CD4-positive, alpha-beta T cell (primary cell): ENCODE measurements at regions of chr3 and their contacts with region 1.

Region 1: DNA sequence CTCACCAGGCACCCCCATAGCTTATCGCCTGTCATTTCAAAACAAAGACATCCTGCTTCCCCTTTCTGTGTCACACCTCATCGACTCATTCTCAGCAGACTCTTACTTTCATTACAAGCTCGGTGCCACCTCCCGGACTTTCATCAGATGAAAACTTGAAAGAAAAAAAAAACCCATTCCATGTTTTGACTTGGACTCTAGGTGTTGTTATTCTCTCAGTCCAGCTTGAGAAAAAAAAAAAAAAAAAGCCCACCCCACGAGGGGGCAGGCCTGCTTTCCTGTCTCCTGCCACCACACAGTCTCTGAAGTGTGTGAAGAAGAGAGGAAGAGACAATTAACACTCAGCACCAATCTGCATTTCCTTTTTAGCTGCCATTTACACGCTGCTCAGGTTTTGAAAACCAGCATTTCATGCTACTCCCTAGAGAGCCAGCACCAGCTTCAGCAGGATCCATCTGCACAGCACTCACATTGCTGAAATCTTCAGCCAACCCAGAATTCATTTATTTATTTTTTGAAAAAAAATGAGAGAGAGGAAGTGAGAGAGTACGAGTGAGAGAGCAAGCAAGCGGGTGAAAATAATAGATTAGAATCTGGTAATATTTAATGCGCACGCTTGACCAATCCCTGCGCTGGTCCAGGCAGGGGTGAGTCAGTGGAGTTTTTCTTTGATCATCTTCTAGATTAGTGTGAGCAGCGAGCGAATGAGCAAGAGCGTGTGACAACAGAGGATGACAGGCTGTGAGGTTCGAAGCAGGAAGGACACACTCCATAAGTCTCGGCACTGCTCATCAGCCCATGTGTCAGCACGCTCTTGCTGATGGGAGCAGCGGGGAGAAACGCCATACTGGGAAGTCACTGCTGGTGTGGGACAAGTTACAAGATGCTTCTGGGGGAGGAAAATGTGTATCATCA is 23.5 kb downstream of the ZNF80 start:
- DNase-seq: peak; percentile 53 to 91 (median 64)
- ATAC-seq: peak; percentile 51
- H3K4me3 ChIP-seq: peak overlapping the region; percentile 59
- H3K4me3 Mint-ChIP-seq: no peak overlapping the region
- H3K27ac ChIP-seq: peak overlapping the region; percentile 93 to 94
- H3K27ac Mint-ChIP-seq: no peak overlapping the region
- H3K4me1 ChIP-seq: peaks cover 70% of the 10 kb centered on the region
- H3K4me1 Mint-ChIP-seq: no peaks in the 10 kb centered on the region
- H3K27me3 ChIP-seq: no peaks in the 10 kb centered on the region
- H3K27me3 Mint-ChIP-seq: no peaks in the 10 kb centered on the region
- CTCF ChIP-seq: peak; percentile 5

Region 2: DNA sequence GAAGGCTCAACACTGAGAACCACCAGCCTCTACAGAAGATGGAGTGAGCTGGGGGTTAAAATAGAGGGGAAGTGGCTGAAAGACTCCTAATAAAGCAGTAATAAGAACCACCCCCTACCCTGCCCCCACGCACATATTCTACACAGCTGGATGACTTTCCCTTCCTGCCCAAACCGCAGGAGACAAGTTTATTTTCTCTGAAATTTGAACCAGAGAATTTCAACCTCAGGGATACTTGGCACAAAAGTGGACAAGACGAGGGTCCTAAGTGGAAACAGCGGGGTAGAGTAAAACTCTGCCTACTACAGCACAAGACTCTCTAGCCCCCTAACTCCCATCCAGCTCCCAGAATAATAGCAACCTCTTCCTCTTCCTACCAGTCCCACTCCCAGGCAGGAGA is 545.9 kb before region 1 on chr3:
- CTCF ChIA-PET with region 1: no interaction called
- POLR2A ChIA-PET with region 1: no interaction called
- intact Hi-C with region 1: no loop called
- DNase-seq: no peak
- ATAC-seq: no peak
- H3K4me3 ChIP-seq: no peak overlapping the region
- H3K4me3 Mint-ChIP-seq: no peak overlapping the region
- H3K27ac ChIP-seq: no peak overlapping the region
- H3K27ac Mint-ChIP-seq: no peak overlapping the region
- H3K4me1 ChIP-seq: peaks cover 4% of the 10 kb centered on the region
- H3K4me1 Mint-ChIP-seq: peaks cover 35% of the 10 kb centered on the region
- H3K27me3 ChIP-seq: no peaks in the 10 kb centered on the region
- H3K27me3 Mint-ChIP-seq: no peaks in the 10 kb centered on the region
- CTCF ChIP-seq: no peak

Region 3: DNA sequence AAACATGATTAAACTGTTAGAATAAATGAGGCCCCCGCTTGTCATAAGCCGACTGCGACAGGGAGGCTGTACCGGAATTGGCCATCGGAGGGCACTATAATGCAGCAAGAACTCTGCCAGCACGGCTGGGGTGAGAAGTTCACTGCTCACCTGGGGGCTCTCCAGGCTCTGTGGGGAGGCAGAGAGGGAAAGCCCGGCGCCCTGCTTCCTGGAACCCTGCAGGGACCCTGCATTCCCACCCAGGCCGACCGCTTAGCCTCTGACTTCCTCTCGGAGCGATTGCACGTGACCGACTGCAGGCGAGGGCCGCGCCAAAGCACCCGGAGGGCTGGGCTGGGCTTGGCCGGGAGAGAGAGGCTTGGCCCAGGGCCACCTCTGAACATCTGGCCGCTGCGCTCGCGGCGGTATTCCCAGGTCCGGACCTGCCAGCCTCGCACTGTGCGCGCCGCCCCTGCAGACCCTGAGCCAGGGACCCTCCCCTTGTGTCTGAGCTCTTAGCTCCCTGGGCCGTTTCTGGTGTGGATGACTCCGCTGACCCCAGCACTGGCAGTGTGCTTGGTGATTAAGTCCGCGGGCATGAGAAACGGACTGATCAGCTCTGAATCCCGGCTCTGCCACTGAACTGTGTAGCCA is 61.2 kb before region 1 on chr3:
- CTCF ChIA-PET with region 1: interaction called, 4 read pairs
- POLR2A ChIA-PET with region 1: interaction called, 8 read pairs
- intact Hi-C with region 1: loop called in 1 of 2 experiments (anchors 2 kb)
- DNase-seq: peak; percentile 73 to 89 (median 83)
- ATAC-seq: peak; percentile 98
- H3K4me3 ChIP-seq: peak overlapping the region; percentile 57
- H3K4me3 Mint-ChIP-seq: peak overlapping the region; percentile 43
- H3K27ac ChIP-seq: no peak overlapping the region
- H3K27ac Mint-ChIP-seq: no peak overlapping the region
- H3K4me1 ChIP-seq: peaks cover 7% of the 10 kb centered on the region
- H3K4me1 Mint-ChIP-seq: peaks cover 5% of the 10 kb centered on the region
- H3K27me3 ChIP-seq: no peaks in the 10 kb centered on the region
- H3K27me3 Mint-ChIP-seq: no peaks in the 10 kb centered on the region
- CTCF ChIP-seq: peak; percentile 90

Region 4: DNA sequence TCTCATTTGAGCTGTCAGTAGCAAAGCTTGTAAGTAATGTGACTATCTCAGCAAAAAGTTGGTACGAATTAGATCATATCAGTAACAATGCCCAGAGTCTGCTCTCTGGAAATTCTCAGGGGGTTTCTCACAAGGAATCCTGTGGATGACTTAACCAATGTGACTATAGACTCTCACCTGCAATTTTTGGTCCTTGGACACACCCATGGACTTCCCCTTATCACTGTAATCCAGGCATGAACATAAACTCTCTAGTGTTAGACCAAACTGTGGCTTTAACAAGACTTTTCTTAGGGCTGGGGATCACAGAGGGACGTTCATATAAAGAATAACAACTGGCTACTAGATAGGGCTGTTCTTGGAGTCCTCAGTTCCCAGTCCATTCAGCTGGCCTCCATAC is 27.4 kb after region 1 on chr3:
- CTCF ChIA-PET with region 1: no interaction called
- POLR2A ChIA-PET with region 1: interaction called, 13 read pairs
- intact Hi-C with region 1: no loop called
- DNase-seq: no peak
- ATAC-seq: no peak
- H3K4me3 ChIP-seq: no peak overlapping the region
- H3K4me3 Mint-ChIP-seq: no peak overlapping the region
- H3K27ac ChIP-seq: no peak overlapping the region
- H3K27ac Mint-ChIP-seq: peak overlapping the region; percentile 6
- H3K4me1 ChIP-seq: peaks cover 10% of the 10 kb centered on the region
- H3K4me1 Mint-ChIP-seq: peaks cover 11% of the 10 kb centered on the region
- H3K27me3 ChIP-seq: no peaks in the 10 kb centered on the region
- H3K27me3 Mint-ChIP-seq: no peaks in the 10 kb centered on the region
- CTCF ChIP-seq: no peak

Region 5: GRCh38 chr3:114290911-114291901 is 77.3 kb after region 1 on chr3:
- CTCF ChIA-PET with region 1: interaction called, 28 read pairs
- POLR2A ChIA-PET with region 1: interaction called, 33 read pairs
- intact Hi-C with region 1: loop called (anchors 2 to 5 kb)
- DNase-seq: peak; percentile 83 to 94 (median 90)
- ATAC-seq: peak; percentile 86
- H3K4me3 ChIP-seq: peak overlapping the region; percentile 40
- H3K4me3 Mint-ChIP-seq: peak overlapping the region; percentile 75
- H3K27ac ChIP-seq: peak overlapping the region; percentile 52 to 63
- H3K27ac Mint-ChIP-seq: peak overlapping the region; percentile 78
- H3K4me1 ChIP-seq: peaks cover 49% of the 10 kb centered on the region
- H3K4me1 Mint-ChIP-seq: peaks cover 26% of the 10 kb centered on the region
- H3K27me3 ChIP-seq: no peaks in the 10 kb centered on the region
- H3K27me3 Mint-ChIP-seq: no peaks in the 10 kb centered on the region
- CTCF ChIP-seq: peak; percentile 87

Region 6: DNA sequence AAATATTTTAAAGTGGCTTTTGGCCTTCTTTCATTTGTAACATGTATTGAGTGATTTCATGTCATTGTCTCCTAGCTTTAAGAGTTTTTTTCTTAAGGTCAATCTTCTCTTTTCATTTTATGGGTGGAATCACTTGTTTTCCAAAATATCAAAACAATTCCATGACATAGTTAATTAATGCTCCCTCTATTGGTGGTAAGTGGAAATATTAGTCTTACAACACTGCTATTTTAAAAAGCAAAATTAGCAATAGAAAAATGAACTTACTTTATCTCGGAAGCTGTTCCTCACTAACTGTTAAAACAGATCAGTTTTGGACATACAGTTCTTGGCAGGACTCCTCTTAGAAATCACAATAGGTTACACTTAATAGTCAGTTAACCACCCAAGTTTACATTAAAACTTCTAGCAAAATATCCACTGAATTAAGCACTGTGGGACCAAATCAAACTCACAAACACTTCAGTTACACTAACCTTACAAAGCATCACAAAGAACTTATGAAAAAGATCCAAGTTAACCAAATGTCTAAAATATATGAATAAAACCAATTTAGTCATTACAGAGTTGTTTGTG is 122.3 kb after region 1 on chr3:
- CTCF ChIA-PET with region 1: interaction called, 4 read pairs
- POLR2A ChIA-PET with region 1: interaction called, 5 read pairs
- intact Hi-C with region 1: loop called in 1 of 2 experiments (anchors 5 kb)
- DNase-seq: no peak
- ATAC-seq: no peak
- H3K4me3 ChIP-seq: no peak overlapping the region
- H3K4me3 Mint-ChIP-seq: no peak overlapping the region
- H3K27ac ChIP-seq: no peak overlapping the region
- H3K27ac Mint-ChIP-seq: peak overlapping the region; percentile 4
- H3K4me1 ChIP-seq: peaks cover 30% of the 10 kb centered on the region
- H3K4me1 Mint-ChIP-seq: peaks cover 35% of the 10 kb centered on the region
- H3K27me3 ChIP-seq: no peaks in the 10 kb centered on the region
- H3K27me3 Mint-ChIP-seq: no peaks in the 10 kb centered on the region
- CTCF ChIP-seq: peak; percentile 47